Prostate gland (tissue), 2 donors: ENCODE measurements at regions of chr1 and their contacts with region 1.

Region 1: GRCh38 chr1:145891587-145892485 is 6.2 kb upstream of the ANKRD35 start:
- DNase-seq: peak; percentile 99
- H3K4me3 ChIP-seq: peak overlapping the region in 1 of 2 donors; percentile 22
- H3K27ac ChIP-seq: peak overlapping the region; percentile 97 to 98
- H3K4me1 ChIP-seq: peaks cover 18% of the 10 kb centered on the region
- H3K27me3 ChIP-seq: no peaks in the 10 kb centered on the region
- CTCF ChIP-seq: peak; percentile 93 to 99 (median 97)
- POLR2A ChIP-seq: peak; percentile 37

Region 2: DNA sequence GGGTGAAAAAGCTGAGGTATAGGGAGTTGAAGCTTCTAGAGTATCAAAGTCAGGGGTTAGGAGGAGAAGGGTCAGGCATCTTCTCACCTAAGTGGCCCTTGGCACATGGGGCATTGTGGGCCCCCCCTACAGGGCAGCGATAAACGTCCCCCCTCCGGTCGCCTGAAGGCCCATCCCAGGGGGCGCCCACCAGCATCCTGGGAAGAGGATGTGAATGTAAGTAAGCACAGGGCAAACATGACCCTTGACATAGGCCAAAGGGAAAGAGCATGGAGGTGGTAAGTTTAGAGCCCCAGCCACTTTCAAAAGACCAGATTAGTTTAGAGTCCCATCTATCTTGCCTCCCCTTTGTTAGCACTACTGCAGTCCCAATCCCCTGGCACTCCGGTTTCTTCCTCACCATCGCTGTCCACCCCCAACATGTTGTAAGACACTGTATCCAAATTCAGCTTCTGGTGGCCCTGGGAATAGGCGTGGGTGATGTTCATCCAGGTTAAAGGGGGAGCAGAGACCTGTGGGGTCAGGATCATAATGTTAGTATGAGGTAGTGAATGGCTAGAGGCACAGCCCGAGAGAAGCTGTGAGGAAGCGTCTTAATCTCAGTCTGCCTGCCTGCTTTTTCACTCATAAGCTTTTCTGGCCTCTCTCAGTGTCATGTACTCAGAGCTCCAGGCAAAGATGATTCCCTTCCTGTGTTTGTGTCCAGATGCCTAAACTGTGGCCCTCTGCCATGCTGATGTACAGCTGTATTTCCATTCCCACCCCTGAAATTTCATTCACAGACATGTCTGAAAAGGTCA is 15.3 kb after region 1 on chr1:
- intact Hi-C with region 1: loop called (anchors 1 kb)
- DNase-seq: no peak
- H3K4me3 ChIP-seq: no peak overlapping the region
- H3K27ac ChIP-seq: no peak overlapping the region
- H3K4me1 ChIP-seq: no peaks in the 10 kb centered on the region
- H3K27me3 ChIP-seq: no peaks in the 10 kb centered on the region
- CTCF ChIP-seq: no peak
- POLR2A ChIP-seq: no peak

Region 3: GRCh38 chr1:146036965-146037646 is 145.3 kb after region 1 on chr1:
- intact Hi-C with region 1: no loop called
- DNase-seq: peak; percentile 70
- H3K4me3 ChIP-seq: peak overlapping the region; percentile 55 to 60
- H3K27ac ChIP-seq: peak overlapping the region; percentile 89 to 92
- H3K4me1 ChIP-seq: peaks cover 2% of the 10 kb centered on the region
- H3K27me3 ChIP-seq: no peaks in the 10 kb centered on the region
- CTCF ChIP-seq: no peak
- POLR2A ChIP-seq: no peak